Aorta (tissue), 5 donors: ENCODE measurements at regions of chr12 and their contacts with region 1.

Region 1: DNA sequence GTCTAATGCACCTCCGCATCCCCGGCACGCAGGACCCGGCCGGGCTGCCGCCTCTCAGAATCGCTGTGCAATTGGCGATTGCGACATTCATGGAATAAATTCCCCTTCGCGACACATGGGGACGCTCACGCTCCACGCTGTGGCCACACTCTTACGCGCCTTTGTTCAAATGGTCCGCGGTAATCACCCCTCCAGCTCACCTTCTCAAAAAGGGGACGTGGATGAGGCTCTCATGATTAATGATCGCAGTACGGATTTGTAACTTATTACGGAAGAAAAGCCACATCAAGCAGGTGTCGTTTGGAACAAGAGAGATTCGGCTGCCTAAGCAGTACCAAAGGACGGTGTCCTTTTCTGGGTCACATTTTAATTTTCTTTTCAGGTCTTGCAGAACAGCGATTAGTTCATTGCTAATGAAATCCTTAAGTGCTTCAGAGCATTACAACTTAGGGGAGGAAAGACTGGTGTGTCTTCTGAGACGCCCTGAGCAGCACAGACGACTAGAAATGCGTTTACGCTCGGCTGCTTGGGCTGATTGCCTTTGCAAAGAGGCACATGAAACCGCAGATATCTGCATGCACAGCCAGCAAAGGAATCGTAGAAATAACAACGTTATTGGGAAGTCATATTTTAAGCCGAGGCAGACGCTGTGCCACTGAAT is 37.3 kb upstream of the ADGRD1 start:
- DNase-seq: peak; percentile 61 to 83
- ATAC-seq: peak; percentile 82
- H3K4me3 ChIP-seq: no peak overlapping the region
- H3K27ac ChIP-seq: no peak overlapping the region
- H3K4me1 ChIP-seq: no peaks in the 10 kb centered on the region
- H3K27me3 ChIP-seq: no peaks in the 10 kb centered on the region

Region 2: DNA sequence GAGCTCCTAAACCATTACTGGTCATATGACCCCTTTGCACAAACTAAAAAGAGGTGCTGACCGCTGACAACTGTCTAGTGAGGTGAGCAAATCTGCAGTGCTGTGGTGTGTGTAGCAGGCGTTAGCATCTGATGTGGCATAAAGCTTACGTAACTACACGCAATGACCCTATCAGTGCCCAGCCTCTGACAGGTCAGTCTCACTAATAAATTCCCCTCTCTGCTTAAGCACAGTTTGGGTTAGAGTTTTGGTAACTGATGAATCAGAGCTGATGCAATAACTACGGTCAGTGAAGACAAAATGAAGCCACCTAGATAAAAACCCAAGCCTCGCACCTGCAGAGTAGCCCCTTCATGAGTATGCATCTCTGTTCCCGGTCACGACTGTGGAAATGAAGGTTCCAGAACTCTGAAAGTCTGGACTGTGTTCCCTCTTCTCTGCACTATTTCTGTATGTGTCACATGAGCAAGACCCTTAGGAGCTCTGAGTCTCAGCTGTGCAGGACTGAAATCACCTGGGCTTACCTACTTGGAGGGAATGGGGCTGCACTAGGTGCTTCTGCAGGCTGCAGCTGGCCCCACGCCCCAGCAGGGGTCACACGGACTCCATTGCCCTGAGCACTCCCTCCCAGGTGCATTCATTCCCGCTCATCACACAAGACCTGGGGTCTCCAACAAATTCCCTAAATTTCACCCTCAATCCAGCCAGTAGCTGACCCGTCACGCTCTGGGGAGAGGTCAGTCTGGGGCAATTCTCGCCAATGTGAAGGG is 254.7 kb before region 1 on chr12:
- intact Hi-C with region 1: no loop called
- DNase-seq: no peak
- ATAC-seq: no peak
- H3K4me3 ChIP-seq: no peak overlapping the region
- H3K27ac ChIP-seq: no peak overlapping the region
- H3K4me1 ChIP-seq: no peaks in the 10 kb centered on the region
- H3K27me3 ChIP-seq: no peaks in the 10 kb centered on the region

Region 3: GRCh38 chr12:130992448-130992847 is 76.1 kb after region 1 on chr12:
- intact Hi-C with region 1: no loop called
- DNase-seq: no peak
- ATAC-seq: no peak
- H3K4me3 ChIP-seq: no peak overlapping the region
- H3K27ac ChIP-seq: no peak overlapping the region
- H3K4me1 ChIP-seq: no peaks in the 10 kb centered on the region
- H3K27me3 ChIP-seq: no peaks in the 10 kb centered on the region

Region 4: GRCh38 chr12:131132118-131132892 is 215.9 kb after region 1 on chr12:
- intact Hi-C with region 1: loop called (anchors 2 kb)
- DNase-seq: peak; percentile 71 to 90
- ATAC-seq: peak; percentile 74
- H3K4me3 ChIP-seq: no peak overlapping the region
- H3K27ac ChIP-seq: no peak overlapping the region
- H3K4me1 ChIP-seq: no peaks in the 10 kb centered on the region
- H3K27me3 ChIP-seq: no peaks in the 10 kb centered on the region